Activated naive CD4-positive, alpha-beta T cell treated with anti-CD3 and anti-CD28 coated beads for 36 hours (primary cell): ENCODE measurements at regions of chr20 and their contacts with region 1.

Region 1: GRCh38 chr20:62065669-62066338 is at the start of gene TAF4:
- DNase-seq: peak; percentile 69
- H3K4me3 Mint-ChIP-seq: peak within 1 kb of the TSS; percentile 84
- H3K27ac Mint-ChIP-seq: peak within 1 kb of the TSS; percentile 90
- H3K4me1 Mint-ChIP-seq: peaks cover 49% of the 10 kb centered on the region
- H3K27me3 Mint-ChIP-seq: no peaks in the 10 kb centered on the region
- total RNA-seq, gene TAF4: 15.0 to 15.4 TPM

Region 2: DNA sequence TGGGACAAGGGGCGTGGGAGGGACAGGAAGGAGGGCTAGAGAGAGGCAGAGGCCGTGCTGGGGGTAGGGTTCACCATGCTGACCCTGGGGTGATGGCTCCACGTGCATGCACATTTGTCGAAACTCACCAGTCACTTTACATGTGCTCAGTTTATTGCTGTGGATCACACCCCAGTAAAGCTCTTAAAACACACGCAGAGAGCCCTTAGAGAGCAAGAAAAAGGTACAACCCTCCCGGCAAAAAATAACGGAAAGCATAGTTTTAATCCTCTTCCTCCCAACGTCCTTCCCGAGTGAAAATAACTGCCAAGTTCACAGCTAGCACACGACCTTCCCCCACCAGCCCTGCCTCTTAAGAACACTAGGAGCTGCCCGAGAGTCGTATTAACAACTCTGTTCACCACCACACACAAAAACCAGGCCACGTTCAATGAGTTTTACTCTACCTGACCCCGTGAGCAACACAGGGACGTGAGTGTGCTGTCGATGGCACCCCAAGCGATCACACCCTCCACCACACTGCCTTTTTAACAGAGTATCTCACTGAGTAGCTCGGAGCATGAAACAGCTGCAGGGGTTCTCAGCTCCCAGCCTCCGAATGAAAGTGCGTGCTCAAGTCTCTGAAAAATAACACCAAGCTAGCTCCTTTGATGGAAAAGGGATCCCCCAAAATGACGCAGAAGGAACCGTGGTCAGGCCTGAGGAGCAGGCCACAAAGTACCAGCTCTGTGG is 39.8 kb before region 1 on chr20:
- CTCF ChIA-PET with region 1: no interaction called
- intact Hi-C with region 1: loop called (anchors 2 kb)
- DNase-seq: peak; percentile 34
- H3K4me3 Mint-ChIP-seq: no peak overlapping the region
- H3K27ac Mint-ChIP-seq: no peak overlapping the region
- H3K4me1 Mint-ChIP-seq: peaks cover 58% of the 10 kb centered on the region
- H3K27me3 Mint-ChIP-seq: no peaks in the 10 kb centered on the region

Region 3: GRCh38 chr20:62050166-62051120 is 15.4 kb before region 1 on chr20:
- CTCF ChIA-PET with region 1: no interaction called
- intact Hi-C with region 1: no loop called
- DNase-seq: no peak
- H3K4me3 Mint-ChIP-seq: no peak overlapping the region
- H3K27ac Mint-ChIP-seq: no peak overlapping the region
- H3K4me1 Mint-ChIP-seq: peaks cover 48% of the 10 kb centered on the region
- H3K27me3 Mint-ChIP-seq: no peaks in the 10 kb centered on the region

Region 4: DNA sequence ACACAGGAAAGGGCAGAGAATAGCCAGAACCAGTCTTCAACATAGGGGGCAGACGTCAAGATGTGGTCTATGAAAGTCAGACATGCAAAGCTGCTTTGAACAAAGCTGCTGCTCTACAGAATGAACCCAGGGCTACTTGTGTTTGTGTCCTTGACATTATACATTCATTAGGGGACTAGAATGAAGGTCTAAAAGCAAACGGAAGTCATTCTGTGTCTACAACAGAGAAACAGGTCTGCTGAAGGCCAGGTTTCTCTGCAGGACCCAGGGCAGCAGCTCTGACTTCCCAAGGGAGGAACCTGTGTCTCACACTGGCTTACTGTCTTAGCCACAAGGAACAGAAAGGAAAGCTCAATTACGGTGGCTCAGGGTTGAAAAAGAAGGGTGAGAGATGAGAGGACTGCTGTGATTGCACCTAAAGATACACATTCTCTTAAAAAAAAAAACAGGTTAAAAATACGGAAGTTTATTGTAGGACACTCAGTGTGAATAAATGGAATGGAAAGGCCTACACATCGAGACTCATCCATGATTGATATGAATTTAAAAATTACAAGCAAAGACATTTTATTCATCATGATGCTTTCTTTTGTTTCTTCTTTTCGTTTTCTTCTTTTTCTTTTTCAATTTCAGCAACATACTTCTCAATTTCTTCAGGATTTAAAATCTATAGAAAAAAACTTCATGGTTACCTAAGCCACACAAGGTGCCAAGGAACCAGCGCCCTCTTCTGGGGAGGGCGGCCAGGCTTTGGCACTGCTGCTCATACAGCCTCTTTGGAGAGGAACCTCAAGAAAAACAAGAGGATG is 70.7 kb after region 1 on chr20:
- CTCF ChIA-PET with region 1: interaction called, 6 read pairs
- intact Hi-C with region 1: loop called (anchors 1 kb)
- DNase-seq: peak; percentile 80
- H3K4me3 Mint-ChIP-seq: no peak overlapping the region
- H3K27ac Mint-ChIP-seq: peak overlapping the region; percentile 71
- H3K4me1 Mint-ChIP-seq: peaks cover 47% of the 10 kb centered on the region
- H3K27me3 Mint-ChIP-seq: no peaks in the 10 kb centered on the region

Region 5: DNA sequence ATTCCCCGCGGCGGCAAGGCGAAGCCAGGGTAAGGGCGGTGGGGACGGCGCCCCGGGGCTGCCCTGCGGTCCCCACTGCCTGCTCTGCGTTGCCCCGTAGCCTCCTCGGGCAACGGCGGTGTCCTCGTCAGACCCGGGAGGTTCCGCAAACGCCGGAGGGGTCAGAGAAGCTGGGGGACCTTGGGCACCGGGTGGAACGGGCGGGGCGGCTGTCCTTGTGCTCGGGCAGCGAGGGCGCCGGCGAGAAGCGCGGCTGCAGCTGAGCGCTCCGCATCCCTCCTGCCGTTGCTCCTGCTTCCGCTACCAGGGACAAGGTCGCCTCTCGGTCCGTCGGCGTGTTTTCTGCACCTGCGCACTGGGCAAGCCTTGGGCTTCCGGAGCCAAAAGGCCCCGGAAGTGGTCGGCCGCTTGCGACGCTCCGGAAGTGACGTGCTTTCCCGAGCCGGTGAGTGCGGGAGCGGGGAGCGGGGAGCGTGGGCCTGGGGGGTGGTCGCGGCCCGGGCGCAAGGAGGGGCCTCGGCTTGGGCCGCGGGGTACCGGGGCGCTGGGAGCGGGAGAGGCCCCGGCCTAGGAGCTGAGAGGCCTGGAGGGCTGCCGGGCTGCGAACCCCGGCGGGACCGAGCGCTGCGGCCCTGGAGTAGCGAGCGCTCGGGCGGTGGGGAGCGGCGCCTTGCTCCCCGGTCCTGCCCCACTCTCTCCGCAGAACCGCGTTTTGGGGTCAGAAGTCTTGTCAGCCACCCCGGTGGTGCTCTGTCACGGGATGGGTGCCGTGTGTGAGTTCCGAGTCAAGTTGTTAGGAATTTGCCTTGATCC is 117.0 kb after region 1 on chr20 and contains the start of gene MTG2:
- CTCF ChIA-PET with region 1: no interaction called
- intact Hi-C with region 1: loop called (anchors 1 kb)
- DNase-seq: peak; percentile 96
- H3K4me3 Mint-ChIP-seq: peak within 1 kb of the TSS; percentile 87
- H3K27ac Mint-ChIP-seq: peak within 1 kb of the TSS; percentile 84
- H3K4me1 Mint-ChIP-seq: peaks cover 38% of the 10 kb centered on the region
- H3K27me3 Mint-ChIP-seq: no peaks in the 10 kb centered on the region
- total RNA-seq, gene MTG2: 34.3 to 36.4 TPM

Region 6: DNA sequence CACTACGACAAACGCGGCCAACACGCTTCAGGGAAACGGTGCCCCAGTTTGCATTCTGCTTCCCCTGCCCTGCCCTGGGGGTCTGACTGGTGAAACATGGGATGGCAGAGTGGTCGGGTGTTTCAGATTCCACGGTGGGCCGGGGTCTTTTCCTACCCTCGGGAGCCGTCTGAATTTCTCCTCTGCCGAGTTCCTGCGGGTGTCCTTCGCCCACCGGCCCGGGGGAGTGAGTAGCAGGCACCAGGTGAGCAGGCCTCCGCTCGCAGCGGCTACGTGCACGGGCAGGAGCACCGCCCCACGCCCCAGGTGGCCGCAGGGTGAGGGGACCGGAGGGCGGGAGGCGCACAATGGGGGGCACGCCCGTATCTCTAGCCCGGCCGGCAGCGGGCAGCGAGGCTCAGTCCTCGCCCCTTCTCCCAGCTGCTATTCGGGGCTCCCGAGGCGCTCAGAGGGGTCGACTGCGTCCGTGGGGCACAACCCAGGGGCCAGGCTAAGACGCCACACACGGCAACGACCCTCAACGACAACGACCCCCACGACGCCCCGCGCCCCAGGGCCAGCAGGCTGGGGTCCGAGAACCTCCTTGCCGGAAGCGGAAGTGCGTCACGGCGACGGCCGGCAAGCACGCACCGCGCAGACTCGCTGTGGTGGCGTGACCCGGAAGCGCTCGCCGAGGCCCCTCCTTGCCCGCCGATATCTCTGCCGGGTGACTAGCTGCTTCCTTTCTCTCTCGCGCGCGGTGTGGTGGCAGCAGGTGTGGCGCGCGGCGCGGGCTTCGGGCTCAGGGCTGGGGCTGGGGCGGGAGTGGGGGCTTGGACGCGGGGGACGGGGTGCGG is 320.8 kb after region 1 on chr20 and contains the start of gene RPS21:
- CTCF ChIA-PET with region 1: no interaction called
- intact Hi-C with region 1: loop called (anchors 2 kb)
- DNase-seq: peak; percentile 94
- H3K4me3 Mint-ChIP-seq: peak within 1 kb of the TSS; percentile 87
- H3K27ac Mint-ChIP-seq: peak within 1 kb of the TSS; percentile 76
- H3K4me1 Mint-ChIP-seq: peaks cover 51% of the 10 kb centered on the region
- H3K27me3 Mint-ChIP-seq: no peaks in the 10 kb centered on the region
- total RNA-seq, gene RPS21: 2,995 to 3,072 TPM